ENCODE measurements at regions of chr15 and their contacts with region 1.

Region 1: DNA sequence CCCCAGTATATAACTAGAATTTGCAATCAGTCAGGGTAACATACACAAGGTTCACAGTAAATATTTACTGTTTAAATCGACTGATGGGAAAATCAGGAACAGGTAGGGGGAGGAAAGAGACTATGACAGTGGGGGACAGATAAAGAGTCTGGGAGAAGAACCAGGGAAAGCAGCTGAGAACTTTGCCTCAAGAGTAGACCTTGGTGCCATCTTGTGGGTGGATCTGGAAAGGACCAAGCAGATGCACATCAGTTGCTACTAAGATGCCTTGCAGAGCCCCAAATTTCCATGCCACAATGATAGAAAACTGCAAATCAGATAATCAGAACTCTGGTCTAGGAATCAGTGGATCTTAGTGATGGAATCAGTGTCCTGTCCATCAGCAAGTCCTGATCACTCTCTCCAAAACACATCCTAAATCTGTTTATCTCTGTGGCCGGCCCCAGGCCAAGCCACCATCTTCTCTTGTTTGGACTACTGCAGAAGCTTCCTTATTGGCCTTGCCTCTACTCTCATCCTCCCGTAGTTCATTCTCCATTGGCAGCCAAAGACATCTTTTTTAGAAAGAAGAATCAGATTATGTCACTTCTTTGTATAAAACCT is 62.7 kb downstream of the PDE8A start:
- DNase-seq: no peak
- H3K4me3 ChIP-seq: no peak overlapping the region
- CTCF ChIP-seq: peak; percentile 78

Region 2: GRCh38 chr15:84588053-84588874 is 456.1 kb before region 1 on chr15:
- CTCF ChIA-PET with region 1: interaction called, 26 read pairs
- POLR2A ChIA-PET with region 1: no interaction called
- DNase-seq: no peak
- H3K4me3 ChIP-seq: peak overlapping the region; percentile 44
- CTCF ChIP-seq: peak; percentile 82

Region 3: DNA sequence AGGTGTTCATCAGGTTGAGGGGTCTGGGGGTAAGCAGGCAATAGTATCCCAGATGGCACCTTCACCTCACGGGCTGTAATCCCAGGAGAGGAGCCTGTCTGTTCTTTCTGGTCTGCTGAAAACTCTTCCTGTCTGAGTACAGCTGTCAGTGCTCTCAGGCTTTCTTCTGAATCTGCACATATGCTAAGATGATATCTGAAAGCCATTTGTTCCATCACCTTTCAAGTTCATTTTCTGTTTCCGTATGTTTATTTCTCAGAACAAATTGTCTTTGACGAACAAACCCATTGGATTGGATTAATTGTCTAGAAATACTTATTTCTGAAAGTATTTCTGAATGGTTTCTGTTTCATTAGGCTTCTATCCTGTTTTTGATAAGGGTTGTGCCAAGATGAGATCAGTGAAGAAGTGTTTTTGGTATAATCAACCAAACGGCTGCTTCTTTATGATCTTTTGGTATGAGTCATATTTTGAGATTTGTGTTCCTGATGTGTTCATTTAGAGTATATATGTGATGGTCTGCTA is 282.7 kb before region 1 on chr15:
- CTCF ChIA-PET with region 1: no interaction called
- POLR2A ChIA-PET with region 1: no interaction called
- DNase-seq: no peak
- H3K4me3 ChIP-seq: no peak overlapping the region
- CTCF ChIP-seq: no peak

Region 4: GRCh38 chr15:84826369-84826823 is 218.0 kb before region 1 on chr15:
- CTCF ChIA-PET with region 1: no interaction called
- POLR2A ChIA-PET with region 1: no interaction called
- DNase-seq: no peak
- H3K4me3 ChIP-seq: no peak overlapping the region
- CTCF ChIP-seq: peak; percentile 19

Region 5: DNA sequence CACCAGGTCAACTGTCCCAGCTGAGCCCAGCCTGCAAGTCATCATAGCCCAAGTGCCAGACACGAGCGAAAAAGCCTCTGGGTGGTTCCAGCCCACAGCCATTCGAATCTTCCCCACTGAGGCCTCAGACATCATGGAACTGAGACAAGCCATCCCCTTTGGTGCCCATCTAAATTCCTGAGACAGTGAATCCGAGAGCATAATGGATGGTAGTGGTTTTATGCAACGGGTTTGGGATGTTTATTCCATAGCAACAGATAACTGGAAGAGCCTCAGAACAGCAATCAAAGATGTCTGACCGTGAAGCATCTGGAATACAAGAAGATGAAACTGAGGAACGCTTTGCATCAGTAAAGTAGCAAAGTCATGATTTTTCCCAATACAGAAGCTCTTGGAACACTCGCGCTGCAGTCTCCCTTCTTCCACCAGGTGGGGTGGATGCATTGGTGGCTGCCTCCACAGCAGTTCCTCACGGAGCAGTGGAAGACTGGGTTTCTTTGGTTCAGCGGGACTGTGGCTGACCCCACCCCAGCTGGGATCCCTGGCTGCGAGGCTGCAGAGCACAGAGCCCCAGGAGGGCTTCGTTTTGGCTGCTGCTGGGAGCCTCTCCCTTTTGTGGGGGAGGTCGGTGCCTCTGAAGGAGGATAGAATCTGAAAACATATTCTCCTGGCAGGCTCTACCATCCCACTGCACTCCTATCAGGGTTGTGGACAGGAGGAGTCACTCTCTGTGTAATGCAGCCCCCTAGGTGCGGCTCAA is 89.1 kb before region 1 on chr15:
- CTCF ChIA-PET with region 1: interaction called, 134 read pairs
- POLR2A ChIA-PET with region 1: no interaction called
- DNase-seq: no peak
- H3K4me3 ChIP-seq: peak overlapping the region; percentile 42
- CTCF ChIP-seq: peak; percentile 88

Region 6: DNA sequence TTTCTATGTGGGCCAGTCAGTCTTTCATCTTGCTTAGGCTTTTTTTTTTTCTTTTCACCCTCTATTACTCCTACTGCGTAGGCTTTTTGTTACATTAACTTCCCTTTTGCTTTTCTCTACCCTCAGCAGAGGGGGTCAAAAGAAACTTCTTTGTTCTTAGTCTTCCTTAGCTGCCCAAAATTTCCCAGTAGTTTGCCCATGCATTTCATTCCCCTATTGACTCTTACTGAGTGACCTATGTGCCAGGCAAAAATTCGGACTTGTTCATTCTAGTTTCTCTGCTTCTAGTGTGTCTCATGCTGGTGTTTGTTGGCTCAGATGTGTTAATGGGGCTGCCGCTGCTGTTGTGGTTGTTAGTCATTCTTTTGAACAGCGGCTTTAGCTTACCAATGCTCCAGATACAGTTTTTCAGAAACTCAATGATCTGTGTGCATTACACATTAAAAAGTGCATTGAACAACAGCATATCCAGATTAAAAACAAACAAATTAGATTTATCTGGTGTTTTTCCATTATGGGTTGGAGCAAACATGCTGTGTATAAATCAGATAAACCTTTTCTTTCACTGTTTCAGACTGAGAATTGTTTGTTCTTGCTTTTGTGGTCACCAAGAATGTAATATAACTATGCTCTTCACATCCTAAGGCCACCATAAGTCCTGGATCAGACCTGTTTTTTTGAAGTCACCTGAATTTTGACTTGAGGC is 19.7 kb before region 1 on chr15:
- CTCF ChIA-PET with region 1: interaction called, 55 read pairs
- POLR2A ChIA-PET with region 1: no interaction called
- DNase-seq: no peak
- H3K4me3 ChIP-seq: no peak overlapping the region
- CTCF ChIP-seq: no peak

Region 7: GRCh38 chr15:85059734-85060133 is 15.4 kb after region 1 on chr15:
- CTCF ChIA-PET with region 1: interaction called, 11 read pairs
- POLR2A ChIA-PET with region 1: no interaction called
- DNase-seq: no peak
- H3K4me3 ChIP-seq: no peak overlapping the region
- CTCF ChIP-seq: no peak